Activated CD4-positive, alpha-beta T cell treated with anti-CD3 and anti-CD28 coated beads, Interleukin-2, amount 10 ng/mL, durations not matched to agents 24 days and 14 days (primary cell): ENCODE measurements at regions of chr6 and their contacts with region 1.

Region 1: DNA sequence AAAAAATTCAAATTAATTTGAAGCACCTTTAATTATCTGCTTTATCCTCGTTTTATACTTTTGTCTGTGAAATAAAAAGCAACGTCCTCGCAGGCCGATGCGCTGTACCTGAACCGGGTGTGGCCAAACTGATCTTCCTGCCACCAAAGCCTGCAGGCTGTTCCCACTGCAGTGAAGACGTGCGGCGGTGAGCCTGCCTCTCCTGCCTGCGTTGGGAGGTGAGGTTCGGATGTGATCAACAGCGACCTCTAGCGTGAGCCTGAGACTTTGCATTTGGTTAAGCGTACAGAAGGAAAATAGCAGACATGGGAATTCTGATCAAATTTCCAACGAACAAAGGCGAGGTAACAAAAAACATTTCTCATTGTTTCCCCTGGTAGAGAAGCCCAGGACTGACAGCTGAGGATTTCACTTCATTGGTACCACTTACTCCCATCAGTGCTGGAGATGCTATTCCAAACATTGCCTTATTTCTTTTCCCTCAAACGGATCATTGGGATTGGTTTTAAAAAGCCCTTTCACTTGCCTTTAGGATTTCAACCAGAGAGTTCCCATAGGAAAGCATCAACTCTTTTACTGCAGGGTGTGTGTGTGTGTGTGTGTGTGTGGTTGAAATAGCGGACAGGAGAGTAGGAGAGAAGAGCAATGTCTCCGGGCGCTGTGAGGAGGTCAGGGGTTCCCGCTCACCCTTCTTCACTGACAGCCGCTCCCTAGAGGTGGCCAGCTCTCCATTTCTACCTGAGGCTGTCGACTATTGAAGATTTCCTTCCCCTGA is 56.6 kb upstream of the CCN6 start:
- DNase-seq: peak; percentile 93
- H3K4me3 Mint-ChIP-seq: peak overlapping the region; percentile 64
- H3K27ac Mint-ChIP-seq: no peak overlapping the region
- H3K4me1 Mint-ChIP-seq: peaks cover 40% of the 10 kb centered on the region
- H3K27me3 Mint-ChIP-seq: no peaks in the 10 kb centered on the region

Region 2: GRCh38 chr6:111709615-111710398 is 287.5 kb before region 1 on chr6:
- intact Hi-C with region 1: loop called (anchors 1 kb)
- DNase-seq: peak; percentile 85
- H3K4me3 Mint-ChIP-seq: no peak overlapping the region
- H3K27ac Mint-ChIP-seq: peak overlapping the region; percentile 59
- H3K4me1 Mint-ChIP-seq: peaks cover 56% of the 10 kb centered on the region
- H3K27me3 Mint-ChIP-seq: no peaks in the 10 kb centered on the region

Region 3: GRCh38 chr6:111837641-111838500 is 159.4 kb before region 1 on chr6:
- intact Hi-C with region 1: loop called (anchors 1 kb)
- DNase-seq: peak; percentile 86
- H3K4me3 Mint-ChIP-seq: peak overlapping the region; percentile 75
- H3K27ac Mint-ChIP-seq: peak overlapping the region; percentile 96
- H3K4me1 Mint-ChIP-seq: peaks cover 64% of the 10 kb centered on the region
- H3K27me3 Mint-ChIP-seq: no peaks in the 10 kb centered on the region

Region 4: GRCh38 chr6:112016320-112016719 is 19.1 kb after region 1 on chr6:
- intact Hi-C with region 1: loop called (anchors 2 kb)
- DNase-seq: peak; percentile 71
- H3K4me3 Mint-ChIP-seq: peak overlapping the region; percentile 33
- H3K27ac Mint-ChIP-seq: peak overlapping the region; percentile 90
- H3K4me1 Mint-ChIP-seq: peaks cover 52% of the 10 kb centered on the region
- H3K27me3 Mint-ChIP-seq: no peaks in the 10 kb centered on the region

Region 5: DNA sequence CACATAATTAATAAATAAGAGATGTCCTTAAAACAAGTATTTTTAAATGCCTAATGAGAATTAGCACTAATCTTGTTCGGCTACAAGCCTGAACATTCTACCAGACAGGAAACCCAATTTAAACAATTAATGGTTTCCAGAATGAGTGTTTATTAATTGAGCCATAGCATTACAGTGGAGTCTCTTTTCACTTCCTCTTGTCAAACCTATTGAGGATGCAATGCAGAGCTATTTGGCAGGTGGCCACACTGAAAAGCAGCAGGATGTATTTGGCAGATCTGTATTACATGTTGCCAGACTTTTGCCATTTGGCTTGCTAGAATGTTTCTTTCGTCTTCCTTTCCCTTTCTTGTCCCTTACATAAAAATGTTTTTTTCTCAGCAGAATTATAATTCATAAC is 1384.7 kb after region 1 on chr6:
- intact Hi-C with region 1: loop called (anchors 10 kb)
- DNase-seq: no peak
- H3K4me3 Mint-ChIP-seq: no peak overlapping the region
- H3K27ac Mint-ChIP-seq: no peak overlapping the region
- H3K4me1 Mint-ChIP-seq: no peaks in the 10 kb centered on the region
- H3K27me3 Mint-ChIP-seq: no peaks in the 10 kb centered on the region